K562 (cell line): ENCODE measurements at regions of chr17 and their contacts with region 1.

Region 1: DNA sequence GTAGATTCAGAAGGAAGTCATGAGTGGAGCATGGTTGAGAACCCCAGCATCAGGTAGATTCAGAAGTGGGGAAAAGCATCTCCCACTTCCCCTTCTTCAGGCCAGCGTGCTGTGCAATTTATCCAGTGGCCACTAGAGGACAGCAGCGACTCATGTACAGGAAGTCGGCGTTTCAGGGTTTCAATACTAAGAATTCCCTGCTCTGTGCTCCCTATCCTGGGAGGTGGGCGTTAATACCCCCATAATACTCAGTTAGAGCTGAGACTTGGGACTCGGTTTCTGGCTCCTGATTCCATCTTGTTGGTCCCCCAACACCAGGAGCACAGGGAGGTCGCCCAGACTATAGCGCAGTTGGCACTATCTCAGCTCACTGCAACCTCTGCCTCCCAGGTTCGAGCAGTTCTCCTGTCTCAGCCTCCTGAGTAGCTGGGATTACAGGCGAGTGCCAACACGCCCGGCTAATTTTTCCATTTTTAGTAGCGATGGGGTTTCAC is 75.3 kb upstream of the AMZ2 start:
- DNase-seq: peak; percentile 26 to 73 (median 33)
- ATAC-seq: peak; percentile 89
- H3K4me3 ChIP-seq: no peak overlapping the region
- H3K27ac ChIP-seq: no peak overlapping the region
- H3K4me1 ChIP-seq: peaks cover 0 to 6% of the 10 kb centered on the region in 2 experiments; a peak in 3 of 5 replicates
- H3K27me3 ChIP-seq: no peaks in the 10 kb centered on the region; a peak in 2 of 5 replicates
- CTCF ChIP-seq: peak; percentile 82 to 95 (median 94)
- EP300 ChIP-seq: no peak
- POLR2A ChIP-seq: no peak
- RAD21 ChIP-seq: peak; percentile 91 to 93

Region 2: DNA sequence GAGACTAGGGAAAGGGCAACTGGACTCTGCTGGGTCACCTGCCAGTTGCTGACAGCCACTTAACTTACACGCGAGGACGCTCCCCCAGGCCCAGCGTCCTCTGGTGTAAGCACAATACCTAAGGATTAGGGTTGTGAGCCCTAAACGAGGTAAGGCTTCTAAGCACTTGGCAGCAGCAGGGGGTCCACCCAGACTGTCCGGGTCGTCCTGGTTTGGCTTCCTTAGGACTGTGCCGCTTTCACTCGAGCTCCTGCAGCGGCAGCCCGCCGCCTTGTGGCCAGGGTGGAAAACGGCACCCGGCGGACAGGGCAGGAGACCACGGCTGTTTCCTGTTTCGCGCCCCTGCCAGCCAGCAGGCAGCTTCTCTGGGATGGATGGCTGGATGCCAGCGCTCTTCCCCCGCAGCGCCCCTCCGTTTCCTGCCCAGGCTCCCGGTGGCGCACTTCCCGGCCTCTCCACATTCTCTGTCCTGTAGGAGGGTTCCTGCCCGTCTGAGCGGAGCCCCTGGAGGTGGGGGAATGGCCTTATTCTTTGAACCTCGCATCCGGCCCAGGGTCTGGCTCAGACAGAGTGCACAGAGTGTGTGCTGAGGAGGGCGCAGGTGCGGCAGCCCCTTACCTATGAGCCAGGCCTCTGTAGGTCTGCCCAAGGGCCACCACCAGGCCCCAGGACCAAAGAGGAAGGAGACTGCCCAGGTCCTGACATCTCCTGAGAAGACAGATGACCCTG is 28.3 kb after region 1 on chr17:
- CTCF ChIA-PET with region 1: interaction called, 8 read pairs
- POLR2A ChIA-PET with region 1: no interaction called
- in situ Hi-C with region 1: no loop called
- intact Hi-C with region 1: loop called (anchors 2 kb)
- DNase-seq: peak; percentile 69 to 77 (median 70)
- ATAC-seq: peak; percentile 84
- H3K4me3 ChIP-seq: no peak overlapping the region
- H3K27ac ChIP-seq: no peak overlapping the region
- H3K4me1 ChIP-seq: peaks cover 3 to 48% of the 10 kb centered on the region in 2 experiments; a peak in 2 of 5 replicates
- H3K27me3 ChIP-seq: peaks cover 9 to 33% of the 10 kb centered on the region in 2 experiments; a peak in 3 of 5 replicates
- CTCF ChIP-seq: peak; percentile 79 to 89 (median 87)
- EP300 ChIP-seq: no peak
- POLR2A ChIP-seq: no peak
- RAD21 ChIP-seq: peak; percentile 69 to 84

Region 3: DNA sequence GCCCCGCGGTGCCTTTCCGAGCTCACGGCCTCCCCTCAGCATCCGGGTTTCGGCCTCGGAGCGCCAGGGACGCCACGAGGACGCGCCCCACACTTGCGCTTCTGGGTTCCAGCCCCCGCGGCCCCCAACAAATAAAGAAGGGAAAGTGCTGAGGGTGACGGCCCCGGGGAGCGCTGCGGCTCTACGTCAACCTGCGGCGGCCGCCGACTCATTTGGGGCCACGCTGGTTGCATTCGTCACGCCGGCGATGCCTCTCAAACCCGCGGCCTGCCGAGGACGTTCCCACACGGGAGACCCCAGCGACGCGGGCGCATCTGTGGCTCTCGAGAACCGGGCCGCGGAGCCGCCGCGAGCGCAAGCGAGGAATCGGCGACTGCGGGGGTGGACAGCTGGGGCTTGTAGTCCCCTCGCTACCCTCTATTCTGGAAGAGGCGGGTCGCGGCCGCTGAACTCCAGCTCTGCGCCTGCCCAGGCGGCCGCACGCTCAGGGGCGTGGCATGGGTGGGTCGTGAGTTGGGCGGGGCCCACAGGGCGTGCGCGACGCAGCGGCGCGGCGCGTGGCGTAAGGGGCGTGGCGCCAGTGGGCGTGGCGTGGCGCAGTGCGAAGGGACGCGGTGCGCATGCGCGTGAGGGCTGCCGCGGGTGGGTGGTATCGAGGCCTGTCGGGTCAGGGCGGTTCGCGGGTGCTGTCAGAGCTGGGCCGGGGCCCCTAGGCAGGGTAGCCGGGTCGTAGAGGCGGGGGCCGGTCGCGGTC is 75.1 kb after region 1 on chr17 and contains the start of gene AMZ2:
- CTCF ChIA-PET with region 1: no interaction called
- POLR2A ChIA-PET with region 1: no interaction called
- in situ Hi-C with region 1: no loop called
- intact Hi-C with region 1: loop called (anchors 10 kb)
- DNase-seq: peak; percentile 94 to 97 (median 96)
- ATAC-seq: peak; percentile 99
- H3K4me3 ChIP-seq: peak within 1 kb of the TSS; percentile 77
- H3K27ac ChIP-seq: peak within 1 kb of the TSS; percentile 84
- H3K4me1 ChIP-seq: peaks cover 8 to 26% of the 10 kb centered on the region in 2 experiments; a peak in 3 of 5 replicates
- H3K27me3 ChIP-seq: no peaks in the 10 kb centered on the region
- CTCF ChIP-seq: no peak
- EP300 ChIP-seq: no peak
- POLR2A ChIP-seq: peak; percentile 92
- RAD21 ChIP-seq: no peak
- polyA plus RNA-seq, gene AMZ2: 56.9 to 74.5 TPM

Region 4: DNA sequence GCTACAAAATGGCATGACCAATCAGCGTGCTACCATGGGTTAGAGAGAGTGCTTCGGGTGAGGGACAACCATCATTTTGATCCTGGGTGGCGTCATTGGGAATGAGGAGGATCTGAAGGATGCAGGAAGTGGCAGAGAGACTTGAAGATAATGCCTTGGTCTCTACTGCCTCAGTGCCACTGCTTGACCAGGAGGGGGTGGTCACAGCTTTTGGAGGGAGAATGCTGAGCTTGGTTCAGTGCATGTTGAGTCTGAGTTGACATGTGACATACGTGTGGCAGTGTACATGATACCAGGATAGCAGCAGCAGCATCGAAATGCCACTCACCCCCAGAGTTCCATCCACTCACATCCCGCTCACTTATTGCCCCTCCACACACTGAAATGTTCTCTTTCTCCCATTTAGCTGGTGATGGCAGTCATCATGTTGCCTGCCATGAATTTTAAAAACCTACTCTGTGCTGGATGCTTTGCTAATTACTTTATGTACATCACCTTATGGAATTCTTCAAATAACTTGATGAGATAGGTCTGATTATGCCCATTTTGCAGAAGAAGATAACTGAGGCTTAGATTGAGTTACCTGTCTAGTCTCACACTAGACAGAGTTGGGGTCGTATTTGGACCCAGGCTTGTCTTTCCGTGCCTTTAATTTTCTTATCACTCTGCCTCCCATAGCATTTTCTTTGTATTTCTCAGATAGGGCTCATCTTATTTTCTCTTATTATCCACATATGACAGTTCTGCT is 155.5 kb after region 1 on chr17:
- CTCF ChIA-PET with region 1: no interaction called
- POLR2A ChIA-PET with region 1: no interaction called
- in situ Hi-C with region 1: no loop called
- intact Hi-C with region 1: no loop called
- DNase-seq: no peak
- ATAC-seq: no peak
- H3K4me3 ChIP-seq: no peak overlapping the region
- H3K27ac ChIP-seq: no peak overlapping the region
- H3K4me1 ChIP-seq: no peaks in the 10 kb centered on the region
- H3K27me3 ChIP-seq: peaks cover 0 to 34% of the 10 kb centered on the region in 2 experiments; a peak in 3 of 5 replicates
- CTCF ChIP-seq: 0 out of 6 replicates have a peak, but pooled peaks of 2 of the 3 experiments have one; percentile 17
- EP300 ChIP-seq: no peak
- POLR2A ChIP-seq: no peak
- RAD21 ChIP-seq: no peak

Region 5: GRCh38 chr17:68759343-68760132 is 587.0 kb after region 1 on chr17:
- CTCF ChIA-PET with region 1: no interaction called
- POLR2A ChIA-PET with region 1: no interaction called
- in situ Hi-C with region 1: loop called (anchors 25 kb)
- intact Hi-C with region 1: loop called (anchors 2 kb)
- DNase-seq: peak; percentile 84 to 93 (median 86)
- ATAC-seq: peak; percentile 99
- H3K4me3 ChIP-seq: peak overlapping the region; percentile 23
- H3K27ac ChIP-seq: peak overlapping the region; percentile 63
- H3K4me1 ChIP-seq: peaks cover 3 to 6% of the 10 kb centered on the region in 2 experiments; a peak in 2 of 5 replicates
- H3K27me3 ChIP-seq: no peaks in the 10 kb centered on the region; a peak in 1 of 5 replicates
- CTCF ChIP-seq: peak; percentile 84 to 96 (median 95)
- EP300 ChIP-seq: peak; percentile 3; the same call in 1 of the 2 replicates
- POLR2A ChIP-seq: no peak
- RAD21 ChIP-seq: peak; percentile 90 to 94